PC-3 (cell line): ENCODE measurements at regions of chr12 and their contacts with region 1.

Region 1: DNA sequence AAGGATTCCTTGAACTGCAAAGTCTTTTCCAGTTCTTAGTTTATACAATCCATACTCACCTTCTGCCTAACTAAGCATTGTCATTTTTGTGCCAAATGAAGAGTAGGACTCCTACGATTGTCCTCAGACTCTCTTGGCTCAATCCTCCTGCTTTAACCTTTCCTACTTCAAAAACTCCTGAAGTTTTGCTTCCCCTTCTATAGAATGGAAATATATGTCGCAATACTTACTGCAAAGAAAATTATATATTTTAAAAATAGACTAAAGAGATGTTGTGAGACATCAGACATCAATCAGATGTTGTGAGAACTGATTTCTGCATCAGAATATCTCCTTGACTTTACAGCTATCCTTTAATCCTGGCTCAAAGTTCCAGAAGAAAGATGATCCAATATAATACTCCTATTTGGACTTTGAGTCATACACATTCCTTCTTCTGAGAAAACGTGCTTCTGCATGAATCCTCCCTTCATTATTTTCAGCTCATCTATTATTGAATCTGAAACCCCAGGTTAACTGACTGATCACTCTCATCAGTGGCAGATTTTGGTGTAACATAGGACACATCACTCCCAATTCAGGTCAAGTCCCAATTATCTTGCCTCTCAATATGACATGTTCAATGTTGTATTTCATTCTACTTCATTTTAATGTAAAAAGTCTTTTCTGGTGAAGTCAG is 48.8 kb downstream of the A2M start:
- DNase-seq: no peak
- ATAC-seq: no peak
- H3K4me3 ChIP-seq: no peak overlapping the region
- H3K27ac ChIP-seq: no peak overlapping the region
- H3K4me1 ChIP-seq: peaks cover 8% of the 10 kb centered on the region; the same call in 1 of the 2 replicates
- H3K27me3 ChIP-seq: no peaks in the 10 kb centered on the region
- CTCF ChIP-seq: no peak

Region 2: DNA sequence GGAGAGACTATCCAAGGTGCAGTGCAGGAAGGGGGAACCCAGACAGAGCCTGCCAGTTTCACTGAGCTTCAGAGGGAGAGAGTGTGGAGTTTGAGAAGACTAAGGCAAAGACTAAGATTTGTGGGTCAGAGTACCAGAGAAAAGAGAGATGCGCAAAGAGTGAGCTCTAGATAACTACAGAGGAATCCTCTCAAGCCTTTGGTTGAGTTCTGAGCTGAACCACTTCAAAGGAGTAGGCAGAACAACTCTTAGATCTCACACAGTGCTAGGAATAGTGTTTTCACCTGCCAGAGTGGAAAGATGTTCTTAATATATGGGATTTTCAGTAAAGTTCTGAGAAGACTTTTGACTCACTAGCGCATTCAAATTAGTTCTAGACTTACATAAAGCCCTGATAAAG is 106.7 kb before region 1 on chr12:
- CTCF ChIA-PET with region 1: no interaction called
- POLR2A ChIA-PET with region 1: no interaction called
- intact Hi-C with region 1: no loop called
- DNase-seq: no peak
- ATAC-seq: no peak
- H3K4me3 ChIP-seq: no peak overlapping the region
- H3K27ac ChIP-seq: no peak overlapping the region
- H3K4me1 ChIP-seq: no peaks in the 10 kb centered on the region
- H3K27me3 ChIP-seq: no peaks in the 10 kb centered on the region
- CTCF ChIP-seq: no peak

Region 3: GRCh38 chr12:9039397-9039977 is 27.4 kb before region 1 on chr12:
- CTCF ChIA-PET with region 1: no interaction called
- POLR2A ChIA-PET with region 1: no interaction called
- intact Hi-C with region 1: no loop called
- DNase-seq: peak; percentile 64
- ATAC-seq: peak; percentile 51; the same call in 1 of the 2 replicates
- H3K4me3 ChIP-seq: no peak overlapping the region
- H3K27ac ChIP-seq: no peak overlapping the region
- H3K4me1 ChIP-seq: no peaks in the 10 kb centered on the region
- H3K27me3 ChIP-seq: no peaks in the 10 kb centered on the region; the same call in 1 of the 2 replicates
- CTCF ChIP-seq: peak; percentile 73

Region 4: GRCh38 chr12:9221483-9221882 is 154.6 kb after region 1 on chr12:
- CTCF ChIA-PET with region 1: no interaction called
- POLR2A ChIA-PET with region 1: interaction called, 16 read pairs
- intact Hi-C with region 1: no loop called
- DNase-seq: no peak
- ATAC-seq: no peak
- H3K4me3 ChIP-seq: no peak overlapping the region
- H3K27ac ChIP-seq: no peak overlapping the region
- H3K4me1 ChIP-seq: no peaks in the 10 kb centered on the region
- H3K27me3 ChIP-seq: peaks cover 6% of the 10 kb centered on the region; the same call in 1 of the 2 replicates
- CTCF ChIP-seq: no peak